ENCODE measurements at regions of chr13 and their contacts with region 1.

Region 1: DNA sequence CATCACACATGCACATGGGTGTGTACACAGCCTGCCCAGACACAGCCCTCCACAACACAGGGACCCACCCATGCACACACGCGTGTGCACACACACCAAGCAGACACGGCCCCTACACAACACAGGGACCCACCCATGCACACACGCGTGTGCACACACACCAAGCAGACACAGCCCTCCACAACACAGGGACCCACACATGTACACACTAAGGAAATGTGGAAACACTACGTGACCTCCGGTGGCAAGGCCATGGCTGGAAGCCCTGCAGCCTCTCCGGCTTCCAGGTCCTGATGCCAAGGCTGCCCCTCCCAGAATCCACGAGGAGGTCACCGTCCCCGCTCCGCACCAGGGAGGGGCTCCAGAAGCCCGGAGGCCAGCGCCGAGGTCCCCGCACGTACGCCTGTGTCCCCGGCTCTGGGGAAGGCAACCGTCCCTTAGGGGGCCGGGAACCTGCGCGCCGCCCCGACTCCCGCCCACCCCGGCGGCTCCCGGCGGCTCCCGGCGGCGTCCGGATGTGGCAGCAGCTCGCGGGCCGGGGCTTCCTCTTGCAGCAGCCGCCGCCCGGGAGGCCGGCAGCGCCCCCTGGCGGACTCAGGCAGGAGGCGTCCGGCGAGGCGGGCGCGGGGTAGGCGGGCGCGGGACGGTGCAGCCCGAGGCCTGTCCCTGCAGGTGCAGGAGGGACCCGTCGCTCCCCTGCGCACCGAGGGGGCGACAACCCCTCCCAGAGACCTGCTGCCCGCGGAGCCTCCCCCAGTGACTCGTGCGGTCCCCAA is 29.8 kb upstream of the GRTP1 start:
- DNase-seq: no peak
- H3K4me3 ChIP-seq: peak overlapping the region; percentile 71 to 75
- H3K27ac ChIP-seq: peak overlapping the region in 1 of 2 experiments; percentile 70; a peak in 1 of 4 replicates
- H3K4me1 ChIP-seq: peaks cover 0 to 9% of the 10 kb centered on the region in 2 experiments; a peak in 1 of 4 replicates
- H3K27me3 ChIP-seq: no peaks in the 10 kb centered on the region
- CTCF ChIP-seq: peak; percentile 60
- EP300 ChIP-seq: no peak
- RAD21 ChIP-seq: peak; percentile 71

Region 2: DNA sequence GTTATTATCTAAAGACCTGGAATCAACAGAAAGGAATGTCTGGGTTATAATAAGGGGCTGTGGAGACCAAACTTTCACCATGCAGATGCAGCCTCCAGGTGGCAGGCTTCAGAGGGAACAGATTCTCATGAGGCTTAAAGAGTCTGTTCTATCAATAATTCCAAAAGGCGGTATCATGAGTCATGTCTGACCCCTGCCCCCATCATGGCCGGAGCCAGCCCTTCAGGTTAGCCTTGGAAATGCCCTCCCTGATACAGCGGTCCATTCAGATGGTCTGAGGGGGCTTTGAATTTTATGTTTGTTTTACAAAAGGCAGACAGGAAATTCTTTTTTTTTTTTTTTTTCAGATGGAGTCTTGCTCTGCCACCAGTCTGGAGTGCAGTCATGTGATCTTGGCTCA is 118.4 kb before region 1 on chr13:
- CTCF ChIA-PET with region 1: interaction called, 10 read pairs
- POLR2A ChIA-PET with region 1: no interaction called
- DNase-seq: peak; percentile 52
- H3K4me3 ChIP-seq: no peak overlapping the region
- H3K27ac ChIP-seq: no peak overlapping the region
- H3K4me1 ChIP-seq: no peaks in the 10 kb centered on the region
- H3K27me3 ChIP-seq: no peaks in the 10 kb centered on the region
- CTCF ChIP-seq: peak; percentile 73
- EP300 ChIP-seq: no peak
- RAD21 ChIP-seq: peak; percentile 58

Region 3: GRCh38 chr13:113552786-113553432 is 159.2 kb after region 1 on chr13:
- CTCF ChIA-PET with region 1: no interaction called
- POLR2A ChIA-PET with region 1: no interaction called
- DNase-seq: no peak
- H3K4me3 ChIP-seq: no peak overlapping the region
- H3K27ac ChIP-seq: no peak overlapping the region
- H3K4me1 ChIP-seq: peaks cover 0 to 21% of the 10 kb centered on the region in 2 experiments; a peak in 2 of 4 replicates
- H3K27me3 ChIP-seq: no peaks in the 10 kb centered on the region
- CTCF ChIP-seq: no peak
- EP300 ChIP-seq: no peak
- RAD21 ChIP-seq: no peak

Region 4: GRCh38 chr13:113573065-113573464 is 179.3 kb after region 1 on chr13:
- CTCF ChIA-PET with region 1: no interaction called
- POLR2A ChIA-PET with region 1: no interaction called
- DNase-seq: no peak
- H3K4me3 ChIP-seq: no peak overlapping the region
- H3K27ac ChIP-seq: no peak overlapping the region
- H3K4me1 ChIP-seq: no peaks in the 10 kb centered on the region
- H3K27me3 ChIP-seq: no peaks in the 10 kb centered on the region
- CTCF ChIP-seq: no peak
- EP300 ChIP-seq: no peak
- RAD21 ChIP-seq: no peak

Region 5: DNA sequence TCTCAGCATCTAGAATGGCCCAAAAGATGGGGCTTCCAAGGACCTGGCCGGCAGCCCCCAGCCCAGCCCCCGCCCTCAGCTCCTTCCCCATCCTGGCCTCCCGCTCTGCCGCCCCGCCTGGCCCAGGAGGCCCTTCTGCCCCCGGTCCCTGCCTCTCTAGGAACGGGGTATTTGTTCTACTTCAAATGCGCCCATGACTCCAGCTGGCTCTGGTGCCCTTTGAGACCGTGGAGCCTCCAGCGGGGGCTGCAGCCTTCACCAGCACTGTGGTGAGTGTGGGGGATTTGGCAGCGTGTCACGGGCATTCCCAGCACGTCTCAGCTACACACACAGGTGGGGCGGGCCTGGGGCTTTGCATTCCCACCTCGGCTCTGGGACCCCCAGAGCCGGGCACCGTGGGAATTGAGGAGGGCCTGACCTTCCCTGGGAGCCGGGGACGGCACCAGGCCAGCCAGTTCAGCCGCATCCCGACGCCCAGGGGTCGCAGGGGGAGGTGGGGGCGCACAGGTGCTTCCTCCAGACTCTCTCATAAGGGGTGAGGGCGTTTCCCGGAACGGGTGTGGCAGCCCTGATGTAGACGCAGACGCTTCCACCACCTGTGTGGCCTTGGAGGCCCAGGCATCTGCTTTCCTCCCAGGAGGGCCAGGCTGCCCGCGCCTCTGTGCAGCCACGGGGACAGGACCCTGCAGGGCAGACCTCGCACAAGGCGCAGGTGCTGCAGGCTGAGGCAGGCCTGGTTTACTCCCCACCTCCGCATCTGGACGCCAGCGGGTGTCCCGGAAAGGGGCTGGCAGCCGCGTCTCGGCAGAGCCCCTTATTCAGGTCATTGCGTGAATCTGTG is 263.3 kb after region 1 on chr13:
- CTCF ChIA-PET with region 1: no interaction called
- POLR2A ChIA-PET with region 1: no interaction called
- DNase-seq: no peak
- H3K4me3 ChIP-seq: no peak overlapping the region
- H3K27ac ChIP-seq: no peak overlapping the region
- H3K4me1 ChIP-seq: peaks cover 0 to 7% of the 10 kb centered on the region in 2 experiments; a peak in 1 of 4 replicates
- H3K27me3 ChIP-seq: no peaks in the 10 kb centered on the region
- CTCF ChIP-seq: no peak
- EP300 ChIP-seq: no peak
- RAD21 ChIP-seq: no peak

Measured in SK-N-SH (cell line).